H1 (cell line): ENCODE measurements at regions of chr11 and their contacts with region 1.

Region 1: GRCh38 chr11:43447151-43447550 is 88.4 kb downstream of the TTC17 start:
- DNase-seq: no peak
- H3K4me3 ChIP-seq: no peak overlapping the region
- H3K27ac ChIP-seq: no peak overlapping the region
- H3K4me1 ChIP-seq: no peaks in the 10 kb centered on the region
- H3K27me3 ChIP-seq: no peaks in the 10 kb centered on the region
- CTCF ChIP-seq: no peak
- EP300 ChIP-seq: no peak
- POLR2A ChIP-seq: no peak
- RAD21 ChIP-seq: no peak

Region 2: GRCh38 chr11:43419460-43419859 is 27.7 kb before region 1 on chr11:
- CTCF ChIA-PET with region 1: interaction called, 10 read pairs
- POLR2A ChIA-PET with region 1: no interaction called
- DNase-seq: no peak
- H3K4me3 ChIP-seq: no peak overlapping the region
- H3K27ac ChIP-seq: no peak overlapping the region
- H3K4me1 ChIP-seq: no peaks in the 10 kb centered on the region
- H3K27me3 ChIP-seq: no peaks in the 10 kb centered on the region
- CTCF ChIP-seq: peak in 2 of 3 experiments; percentile 16 to 56; a peak in 2 of 4 replicates
- EP300 ChIP-seq: no peak
- POLR2A ChIP-seq: no peak
- RAD21 ChIP-seq: peak; percentile 59 to 63

Region 3: GRCh38 chr11:43969543-43969942 is 522.4 kb after region 1 on chr11:
- CTCF ChIA-PET with region 1: no interaction called
- POLR2A ChIA-PET with region 1: no interaction called
- DNase-seq: no peak
- H3K4me3 ChIP-seq: no peak overlapping the region
- H3K27ac ChIP-seq: no peak overlapping the region
- H3K4me1 ChIP-seq: no peaks in the 10 kb centered on the region
- H3K27me3 ChIP-seq: no peaks in the 10 kb centered on the region
- CTCF ChIP-seq: no peak
- EP300 ChIP-seq: no peak
- POLR2A ChIP-seq: no peak
- RAD21 ChIP-seq: no peak